ENCODE measurements at regions of chr2 and their contacts with region 1.

Region 1: GRCh38 chr2:74482801-74483674 is at the starts of genes CCDC142 and TTC31:
- DNase-seq: peak; percentile 94
- H3K4me3 Mint-ChIP-seq: peak within 1 kb of the TSS; percentile 99
- H3K27ac Mint-ChIP-seq: peak within 1 kb of the TSS; percentile 98
- H3K4me1 Mint-ChIP-seq: peaks cover 48% of the 10 kb centered on the region
- H3K27me3 Mint-ChIP-seq: no peaks in the 10 kb centered on the region
- total RNA-seq, gene CCDC142: 20.9 to 25.0 TPM
- total RNA-seq, gene TTC31: 42.3 to 42.9 TPM

Region 2: GRCh38 chr2:74206180-74206688 is 276.8 kb before region 1 on chr2:
- CTCF ChIA-PET with region 1: no interaction called
- POLR2A ChIA-PET with region 1: no interaction called
- DNase-seq: peak; percentile 67
- H3K4me3 Mint-ChIP-seq: peak overlapping the region; percentile 64
- H3K27ac Mint-ChIP-seq: peak overlapping the region; percentile 96
- H3K4me1 Mint-ChIP-seq: peaks cover 78% of the 10 kb centered on the region
- H3K27me3 Mint-ChIP-seq: no peaks in the 10 kb centered on the region

Region 3: GRCh38 chr2:74440378-74441169 is 42.5 kb before region 1 on chr2:
- CTCF ChIA-PET with region 1: no interaction called
- POLR2A ChIA-PET with region 1: no interaction called
- DNase-seq: peak; percentile 42
- H3K4me3 Mint-ChIP-seq: peak overlapping the region; percentile 19
- H3K27ac Mint-ChIP-seq: no peak overlapping the region
- H3K4me1 Mint-ChIP-seq: peaks cover 11% of the 10 kb centered on the region
- H3K27me3 Mint-ChIP-seq: peaks cover 51% of the 10 kb centered on the region

Region 4: DNA sequence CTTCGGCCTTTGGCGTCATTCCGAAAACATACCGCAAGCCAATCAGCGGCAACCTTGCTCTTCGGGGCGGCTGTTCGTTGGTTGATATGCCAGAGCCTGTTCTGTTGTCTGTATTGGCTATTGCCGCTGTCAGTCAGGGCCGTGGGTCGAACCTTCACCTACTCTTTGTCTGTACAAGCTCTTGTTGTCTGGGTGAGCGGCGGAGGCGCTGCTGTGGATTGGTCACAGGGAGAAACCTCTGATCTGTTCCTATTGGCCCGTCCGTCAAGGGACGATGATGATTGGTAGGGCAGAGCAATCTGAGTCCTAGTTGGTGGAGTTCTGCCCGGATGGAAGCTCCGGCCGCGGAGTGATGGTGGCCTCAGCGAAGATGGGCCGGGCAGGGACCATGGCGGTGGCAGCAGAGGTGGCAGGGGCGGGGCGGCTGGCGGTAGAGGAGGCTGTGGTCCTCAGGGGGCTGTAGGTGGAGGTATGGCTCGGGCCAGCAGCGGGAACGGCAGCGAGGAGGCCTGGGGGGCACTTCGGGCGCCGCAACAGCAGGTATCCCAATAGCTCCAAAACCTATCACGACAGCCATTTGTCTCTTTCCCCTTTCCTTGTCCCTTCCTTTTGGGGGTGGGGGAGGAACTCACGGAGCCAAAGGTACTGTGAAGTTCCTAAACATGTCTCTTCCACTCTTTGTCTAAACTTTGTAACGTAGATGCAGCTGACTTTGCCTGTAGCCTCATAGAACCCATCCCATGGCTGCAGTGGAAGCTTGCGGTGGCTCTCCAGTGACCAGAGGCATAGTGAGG is 24.7 kb before region 1 on chr2 and contains the start of gene WBP1:
- CTCF ChIA-PET with region 1: interaction called, 53 read pairs
- POLR2A ChIA-PET with region 1: interaction called, 103 read pairs
- DNase-seq: peak; percentile 100
- H3K4me3 Mint-ChIP-seq: peak within 1 kb of the TSS; percentile 88
- H3K27ac Mint-ChIP-seq: peak within 1 kb of the TSS; percentile 95
- H3K4me1 Mint-ChIP-seq: peaks cover 60% of the 10 kb centered on the region
- H3K27me3 Mint-ChIP-seq: no peaks in the 10 kb centered on the region
- total RNA-seq, gene WBP1: 58.3 to 60.4 TPM

Region 5: DNA sequence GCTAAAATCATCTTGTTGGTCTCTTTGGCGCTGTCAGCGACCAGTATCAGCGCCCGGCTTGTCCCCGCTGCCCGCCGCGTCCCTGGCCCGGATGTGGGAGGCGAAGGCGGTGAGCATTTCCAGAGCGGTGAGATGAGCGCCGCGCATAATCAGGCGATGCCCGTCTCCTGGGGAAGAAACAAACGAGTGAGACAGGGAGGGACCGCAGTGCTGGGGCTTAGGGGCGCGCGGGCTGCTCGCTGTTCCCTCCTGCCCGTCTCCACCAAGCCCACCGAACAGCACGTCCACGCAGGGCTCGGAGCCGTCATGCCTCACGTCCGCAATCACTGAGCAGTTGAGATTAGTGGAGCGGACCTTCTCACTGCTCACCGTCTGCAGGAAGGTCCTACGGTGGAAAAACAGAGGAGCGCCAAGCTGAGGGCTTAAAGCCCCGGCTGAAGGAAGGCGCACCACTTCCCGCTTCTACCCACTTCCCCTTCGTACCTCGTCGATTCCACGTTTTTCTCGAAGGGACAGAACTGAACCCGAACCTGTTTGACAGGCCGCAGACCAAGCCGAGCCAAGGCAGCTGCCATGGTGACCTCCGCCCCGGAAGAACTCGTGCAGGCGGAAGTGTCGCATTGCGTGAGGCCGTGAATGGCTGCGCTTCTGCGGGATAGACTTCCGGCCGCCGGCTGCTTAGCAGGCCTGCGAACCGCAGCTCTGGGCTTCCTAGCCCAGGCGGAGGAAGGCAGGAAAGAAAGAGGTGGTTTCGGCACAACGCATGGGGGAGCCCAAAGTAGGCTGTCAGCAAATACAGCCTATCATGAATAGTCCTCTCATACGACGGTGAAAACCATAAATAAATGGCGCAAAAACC is 10.7 kb before region 1 on chr2 and contains the start of gene MRPL53:
- CTCF ChIA-PET with region 1: interaction called, 34 read pairs
- POLR2A ChIA-PET with region 1: interaction called, 81 read pairs
- DNase-seq: peak; percentile 97
- H3K4me3 Mint-ChIP-seq: peak within 1 kb of the TSS; percentile 97
- H3K27ac Mint-ChIP-seq: peak within 1 kb of the TSS; percentile 98
- H3K4me1 Mint-ChIP-seq: peaks cover 36% of the 10 kb centered on the region
- H3K27me3 Mint-ChIP-seq: no peaks in the 10 kb centered on the region
- total RNA-seq, gene MRPL53: 115 to 126 TPM

Region 6: DNA sequence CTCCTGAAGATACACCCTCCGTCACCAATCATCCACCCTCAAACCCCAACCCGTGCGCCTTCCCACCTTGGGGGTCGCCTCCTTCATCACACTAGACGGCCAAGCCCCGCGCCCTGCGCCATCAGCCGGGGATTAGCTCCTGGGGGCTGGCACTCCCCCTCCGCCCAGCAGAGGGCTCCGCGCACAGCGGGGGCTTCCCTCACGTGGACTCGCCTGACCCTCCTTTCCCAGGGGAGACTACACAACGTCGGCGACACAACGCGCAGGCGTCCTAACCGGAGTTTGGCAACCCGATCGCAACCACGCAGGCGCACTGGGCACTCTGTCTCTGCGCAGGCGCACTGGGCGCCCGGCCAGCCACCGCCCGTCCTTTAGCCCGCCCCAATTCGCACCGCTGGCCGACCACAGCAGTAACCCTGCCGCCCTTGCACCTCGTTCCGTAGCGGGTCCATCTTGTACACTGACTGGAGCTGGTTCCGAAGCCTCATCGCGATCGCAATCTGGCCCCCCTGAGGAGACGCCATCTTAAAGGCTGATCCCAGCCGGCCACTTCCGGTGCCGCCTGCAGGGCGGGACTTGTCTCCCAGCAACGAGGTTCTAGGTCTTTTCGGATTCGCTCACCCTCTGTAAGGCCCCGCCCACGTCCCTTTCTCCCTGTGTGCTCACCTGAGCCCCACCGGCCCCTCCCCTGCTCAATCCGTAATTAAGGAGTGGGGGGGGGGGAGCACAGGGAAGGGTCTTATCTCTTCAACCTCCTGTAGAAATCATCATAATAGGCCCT is 24.3 kb after region 1 on chr2 and contains the start of gene PCGF1:
- CTCF ChIA-PET with region 1: interaction called, 12 read pairs
- POLR2A ChIA-PET with region 1: interaction called, 36 read pairs
- DNase-seq: peak; percentile 98
- H3K4me3 Mint-ChIP-seq: peak within 1 kb of the TSS; percentile 97
- H3K27ac Mint-ChIP-seq: peak within 1 kb of the TSS; percentile 99
- H3K4me1 Mint-ChIP-seq: peaks cover 69% of the 10 kb centered on the region
- H3K27me3 Mint-ChIP-seq: peaks cover 29% of the 10 kb centered on the region
- total RNA-seq, gene PCGF1: 23.0 to 31.4 TPM

Region 7: GRCh38 chr2:74529357-74530238 is 46.6 kb after region 1 on chr2 and contains the starts of genes AUP1 and HTRA2:
- CTCF ChIA-PET with region 1: interaction called, 90 read pairs
- POLR2A ChIA-PET with region 1: interaction called, 66 read pairs
- DNase-seq: peak; percentile 95
- H3K4me3 Mint-ChIP-seq: peak within 1 kb of the TSS; percentile 97
- H3K27ac Mint-ChIP-seq: peak within 1 kb of the TSS; percentile 96
- H3K4me1 Mint-ChIP-seq: peaks cover 55% of the 10 kb centered on the region
- H3K27me3 Mint-ChIP-seq: no peaks in the 10 kb centered on the region
- total RNA-seq, gene AUP1: 118 to 119 TPM
- total RNA-seq, gene HTRA2: 49.2 to 51.1 TPM

Measured in activated CD4-positive, alpha-beta memory T cell treated with anti-CD3 and anti-CD28 coated beads, Interleukin-2, amount 10 ng/mL, durations not matched to agents 7 days and 5 days (primary cell).